ENCODE measurements at regions of chr6 and their contacts with region 1.

Region 1: GRCh38 chr6:43143235-43144124 is 27.6 kb upstream of the SRF start:
- DNase-seq: peak; percentile 91

Region 2: DNA sequence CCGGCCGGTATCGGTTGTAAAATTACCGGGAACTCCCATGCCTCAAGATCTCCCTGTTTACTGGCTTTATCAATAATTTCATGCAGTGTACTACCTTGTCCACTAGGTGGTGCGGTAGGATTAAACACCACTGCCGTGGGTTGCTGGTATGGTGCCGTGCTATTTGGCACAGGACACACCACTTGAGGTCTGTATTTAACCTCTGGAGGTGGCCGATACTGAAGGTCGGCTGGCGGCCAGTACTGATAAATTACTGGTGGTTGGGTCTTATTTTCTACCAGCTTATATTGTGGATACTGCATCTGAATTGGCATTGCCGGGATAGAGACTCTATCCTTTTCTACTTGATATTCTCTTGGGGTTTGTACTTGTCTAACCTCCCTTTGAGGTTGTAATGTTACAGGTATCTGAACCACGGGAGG is 241.9 kb before region 1 on chr6:
- intact Hi-C with region 1: loop called (anchors 5 kb)
- DNase-seq: peak; percentile 88

Region 3: GRCh38 chr6:43013843-43014433 is 129.5 kb before region 1 on chr6 and contains the starts of genes KLHDC3 and MEA1:
- intact Hi-C with region 1: loop called (anchors 1 kb)
- DNase-seq: peak; percentile 99
- total RNA-seq, gene KLHDC3: 74.9 TPM
- total RNA-seq, gene MEA1: 33.8 TPM

Region 4: DNA sequence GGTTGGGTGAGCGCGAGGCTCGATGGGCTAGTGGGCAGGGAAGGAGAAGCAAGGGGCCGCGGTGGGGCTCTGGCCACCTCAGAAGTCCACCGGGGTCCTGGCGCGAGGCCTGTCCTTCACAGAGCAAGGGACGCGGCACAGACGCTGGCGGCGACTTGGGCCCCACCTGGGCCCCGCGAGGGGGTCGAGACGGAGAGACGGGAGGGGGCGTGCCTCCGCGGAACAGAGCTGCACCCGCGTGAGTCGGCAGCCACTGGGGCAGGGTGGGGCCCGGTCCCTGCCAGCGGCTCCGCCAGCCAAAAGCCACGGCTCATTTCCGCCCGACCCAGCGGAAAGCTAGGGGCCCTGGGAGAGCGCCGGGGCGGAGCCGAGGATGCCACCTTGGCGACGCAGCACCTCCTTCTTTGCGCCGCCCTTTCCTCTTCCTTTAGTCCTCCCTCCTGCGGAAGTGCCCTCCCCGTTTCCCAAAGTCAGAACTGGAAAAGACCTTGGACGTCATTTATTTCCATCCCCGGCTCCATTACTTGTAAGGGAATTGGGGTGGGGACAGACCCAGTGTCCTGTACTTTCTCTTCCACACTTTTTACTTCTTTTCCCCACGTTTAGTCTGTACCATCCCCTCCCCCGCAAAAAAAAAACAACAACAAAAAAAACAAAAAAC is 89.8 kb before region 1 on chr6 and contains the start of gene CUL7:
- intact Hi-C with region 1: loop called (anchors 5 kb)
- DNase-seq: peak; percentile 96
- total RNA-seq, gene CUL7: 11.0 TPM

Region 5: GRCh38 chr6:43070028-43070632 is 73.3 kb before region 1 on chr6:
- intact Hi-C with region 1: loop called (anchors 5 kb)
- DNase-seq: no peak

Region 6: GRCh38 chr6:43263314-43264178 is 120.1 kb after region 1 on chr6:
- intact Hi-C with region 1: no loop called
- DNase-seq: peak; percentile 91

Measured in cardiac septum (tissue), 1 donor.